OCI-LY7 (cell line): ENCODE measurements at regions of chr2 and their contacts with region 1.

Region 1: GRCh38 chr2:219642465-219643080 is 15.1 kb downstream of the SLC4A3 start:
- DNase-seq: peak; percentile 95
- H3K4me3 ChIP-seq: peak overlapping the region; percentile 30
- H3K27ac ChIP-seq: no peak overlapping the region
- H3K4me1 ChIP-seq: peaks cover 6% of the 10 kb centered on the region
- CTCF ChIP-seq: peak; percentile 97

Region 2: GRCh38 chr2:219402665-219403515 is 239.7 kb before region 1 on chr2:
- CTCF ChIA-PET with region 1: no interaction called
- POLR2A ChIA-PET with region 1: no interaction called
- intact Hi-C with region 1: loop called (anchors 5 kb)
- DNase-seq: peak; percentile 79
- H3K4me3 ChIP-seq: no peak overlapping the region
- H3K27ac ChIP-seq: no peak overlapping the region
- H3K4me1 ChIP-seq: no peaks in the 10 kb centered on the region
- CTCF ChIP-seq: peak; percentile 98

Region 3: GRCh38 chr2:219552382-219553167 is 90.0 kb before region 1 on chr2:
- CTCF ChIA-PET with region 1: no interaction called
- POLR2A ChIA-PET with region 1: no interaction called
- intact Hi-C with region 1: no loop called
- DNase-seq: peak; percentile 76
- H3K4me3 ChIP-seq: peak overlapping the region; percentile 69
- H3K27ac ChIP-seq: peak overlapping the region; percentile 46
- H3K4me1 ChIP-seq: peaks cover 7% of the 10 kb centered on the region
- CTCF ChIP-seq: no peak

Region 4: DNA sequence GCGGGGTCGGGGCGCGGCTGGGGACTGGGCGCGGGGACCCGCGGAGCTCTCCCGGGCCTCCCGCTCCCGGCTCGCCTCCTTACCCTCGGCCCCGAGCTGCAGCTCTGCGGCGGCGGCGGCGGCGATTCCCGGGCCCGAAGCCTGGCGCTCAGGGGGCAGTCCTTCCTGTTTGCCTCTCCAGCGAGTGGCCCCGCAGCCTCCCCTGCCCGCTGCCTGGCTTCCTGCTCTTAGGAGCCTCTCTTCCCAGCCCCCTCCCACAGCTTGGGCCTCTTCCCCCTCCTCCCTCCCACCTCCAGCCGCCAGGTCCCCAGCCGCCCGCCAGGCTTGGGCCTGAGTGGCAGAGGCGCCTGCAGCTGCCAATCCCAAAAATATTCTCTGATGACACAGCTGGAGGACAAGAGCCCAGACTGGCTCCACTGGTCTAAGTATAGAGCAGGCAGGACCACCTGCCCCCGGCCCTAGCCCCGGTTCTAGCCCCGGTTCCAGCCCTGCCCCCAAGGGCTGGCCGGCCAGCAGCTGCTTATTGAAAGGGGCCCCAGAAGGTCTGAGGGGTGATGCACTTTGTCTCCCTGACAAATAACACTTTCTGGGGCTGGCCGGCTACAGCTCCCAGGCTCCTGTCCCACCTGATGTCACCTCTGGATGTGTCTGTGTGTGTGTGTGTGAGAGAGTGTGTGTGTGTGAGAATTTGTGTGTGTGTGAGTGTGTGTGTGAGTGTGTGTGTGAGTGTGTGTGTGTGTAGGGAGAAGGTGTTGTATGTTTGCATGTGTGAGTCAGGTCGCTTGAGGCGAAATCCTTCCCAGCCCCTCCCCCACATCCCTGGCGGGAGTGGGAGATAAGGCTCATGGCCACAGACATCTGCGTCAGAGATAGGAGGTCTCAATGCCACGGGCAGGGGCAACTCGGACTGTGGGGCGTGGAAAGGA is 71.0 kb before region 1 on chr2 and contains the start of gene OBSL1:
- CTCF ChIA-PET with region 1: no interaction called
- POLR2A ChIA-PET with region 1: no interaction called
- intact Hi-C with region 1: no loop called
- DNase-seq: no peak
- H3K4me3 ChIP-seq: no peak within 1 kb of the TSS
- H3K27ac ChIP-seq: no peak within 1 kb of the TSS
- H3K4me1 ChIP-seq: no peaks in the 10 kb centered on the region
- CTCF ChIP-seq: no peak
- total RNA-seq, gene OBSL1: 0.25 TPM in 1 of 2 replicates, not detected in the other

Region 5: GRCh38 chr2:219597552-219598307 is 44.8 kb before region 1 on chr2 and contains the start of gene STK11IP:
- CTCF ChIA-PET with region 1: interaction called, 4 read pairs
- POLR2A ChIA-PET with region 1: interaction called, 3 read pairs
- intact Hi-C with region 1: loop called (anchors 1 kb)
- DNase-seq: peak; percentile 96
- H3K4me3 ChIP-seq: peak within 1 kb of the TSS; percentile 77
- H3K27ac ChIP-seq: peak within 1 kb of the TSS; percentile 56
- H3K4me1 ChIP-seq: peaks cover 14% of the 10 kb centered on the region
- CTCF ChIP-seq: no peak
- total RNA-seq, gene STK11IP: 16.5 and 26.5 TPM in 2 replicates

Region 6: DNA sequence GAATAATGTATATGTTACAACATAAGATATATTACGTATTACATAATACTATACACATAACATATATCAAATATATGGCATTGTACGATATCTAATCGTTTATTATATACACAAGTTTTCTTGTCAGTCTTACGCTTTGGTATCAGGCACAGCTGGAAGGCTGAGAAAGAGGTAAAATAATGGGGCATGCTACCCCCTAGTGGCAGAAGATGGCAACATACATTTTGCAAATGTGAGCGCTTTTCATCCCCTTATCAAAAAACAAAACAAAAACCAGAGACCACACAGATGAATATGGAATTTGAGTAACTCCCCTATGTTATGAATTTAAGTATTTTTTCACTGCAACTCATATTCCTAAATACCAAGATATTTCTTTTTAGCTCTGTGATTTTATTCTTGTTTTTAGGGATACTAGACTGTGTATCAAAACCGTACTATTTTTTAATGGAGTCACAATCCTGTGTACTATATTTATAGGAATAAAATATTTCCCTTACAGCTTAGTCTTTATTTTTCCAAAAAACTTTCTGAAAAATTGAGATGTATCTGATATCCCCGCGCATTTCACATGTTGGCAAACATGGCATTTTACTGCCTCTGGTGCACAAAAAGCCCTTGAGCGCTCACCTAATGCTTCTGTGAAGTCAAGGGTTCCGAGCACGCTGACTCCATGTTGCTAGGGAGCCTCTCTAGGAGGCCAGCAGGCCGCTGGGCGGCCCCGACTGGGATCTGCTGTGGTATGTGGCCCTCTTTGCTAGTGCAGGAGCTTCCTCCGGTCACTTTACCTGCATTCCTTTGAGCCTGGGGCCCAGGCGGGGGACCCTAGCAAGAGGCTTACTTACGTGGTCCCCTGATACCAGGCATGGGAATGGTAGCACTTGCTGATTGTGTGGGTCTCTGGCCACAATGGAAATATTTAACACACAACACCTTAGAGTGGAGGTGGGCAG is 47.4 kb after region 1 on chr2:
- CTCF ChIA-PET with region 1: no interaction called
- POLR2A ChIA-PET with region 1: no interaction called
- intact Hi-C with region 1: loop called (anchors 1 kb)
- DNase-seq: peak; percentile 66
- H3K4me3 ChIP-seq: no peak overlapping the region
- H3K27ac ChIP-seq: no peak overlapping the region
- H3K4me1 ChIP-seq: peaks cover 5% of the 10 kb centered on the region
- CTCF ChIP-seq: peak; percentile 79